Caco-2 (cell line): ENCODE measurements at regions of chr15 and their contacts with region 1.

Region 1: GRCh38 chr15:91302588-91303439 is 202.8 kb downstream of the SV2B start:
- DNase-seq: peak; percentile 38 to 39
- H3K4me3 ChIP-seq: no peak overlapping the region
- H3K4me3 Mint-ChIP-seq: no peak overlapping the region
- H3K27ac Mint-ChIP-seq: no peak overlapping the region
- H3K4me1 ChIP-seq: no peaks in the 10 kb centered on the region
- H3K4me1 Mint-ChIP-seq: no peaks in the 10 kb centered on the region
- H3K27me3 ChIP-seq: peaks cover 1% of the 10 kb centered on the region; the same call in 1 of the 2 replicates
- H3K27me3 Mint-ChIP-seq: peaks cover 22% of the 10 kb centered on the region
- CTCF ChIP-seq: peak; percentile 59 to 63

Region 2: DNA sequence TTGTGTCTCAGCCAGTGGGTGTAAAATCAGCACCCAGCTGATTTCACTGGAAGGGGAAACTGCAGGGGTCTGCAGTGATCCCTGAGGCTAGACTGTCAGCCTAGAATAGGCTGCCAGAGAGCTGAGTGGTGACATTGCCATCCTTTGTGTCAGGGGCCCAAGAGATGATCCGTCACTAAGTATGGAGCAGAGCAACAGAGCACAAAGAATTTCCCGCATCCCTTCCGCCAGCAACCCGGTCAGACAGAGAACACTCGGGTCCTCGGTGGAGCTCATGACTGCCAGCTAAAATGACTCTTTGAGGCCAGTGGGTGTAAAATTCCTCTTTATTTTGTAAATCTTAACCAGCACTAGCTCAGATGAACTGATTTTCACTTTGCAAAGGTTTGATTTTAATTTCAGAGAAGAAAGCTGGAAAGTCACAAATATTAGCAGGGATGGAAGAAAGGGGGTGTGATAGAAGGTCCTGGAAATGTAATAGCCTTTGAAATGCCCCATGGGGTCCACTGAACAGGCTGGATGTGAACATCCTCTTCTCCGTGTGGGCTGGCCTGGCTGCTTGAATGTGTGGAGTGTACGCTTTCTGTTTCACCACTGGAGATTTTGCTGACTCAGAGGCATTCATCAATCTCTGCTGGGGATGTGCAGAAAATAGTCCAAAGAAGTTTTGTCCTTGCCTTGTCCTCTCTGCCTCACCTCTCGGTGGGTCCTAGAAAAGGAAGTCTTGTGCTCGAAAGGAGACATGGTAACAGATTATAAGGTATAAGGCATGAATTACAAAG is 64.0 kb before region 1 on chr15:
- CTCF ChIA-PET with region 1: no interaction called
- POLR2A ChIA-PET with region 1: no interaction called
- intact Hi-C with region 1: no loop called
- DNase-seq: no peak
- H3K4me3 ChIP-seq: no peak overlapping the region
- H3K4me3 Mint-ChIP-seq: no peak overlapping the region
- H3K27ac Mint-ChIP-seq: no peak overlapping the region
- H3K4me1 ChIP-seq: no peaks in the 10 kb centered on the region
- H3K4me1 Mint-ChIP-seq: no peaks in the 10 kb centered on the region
- H3K27me3 ChIP-seq: no peaks in the 10 kb centered on the region
- H3K27me3 Mint-ChIP-seq: no peaks in the 10 kb centered on the region
- CTCF ChIP-seq: no peak

Region 3: DNA sequence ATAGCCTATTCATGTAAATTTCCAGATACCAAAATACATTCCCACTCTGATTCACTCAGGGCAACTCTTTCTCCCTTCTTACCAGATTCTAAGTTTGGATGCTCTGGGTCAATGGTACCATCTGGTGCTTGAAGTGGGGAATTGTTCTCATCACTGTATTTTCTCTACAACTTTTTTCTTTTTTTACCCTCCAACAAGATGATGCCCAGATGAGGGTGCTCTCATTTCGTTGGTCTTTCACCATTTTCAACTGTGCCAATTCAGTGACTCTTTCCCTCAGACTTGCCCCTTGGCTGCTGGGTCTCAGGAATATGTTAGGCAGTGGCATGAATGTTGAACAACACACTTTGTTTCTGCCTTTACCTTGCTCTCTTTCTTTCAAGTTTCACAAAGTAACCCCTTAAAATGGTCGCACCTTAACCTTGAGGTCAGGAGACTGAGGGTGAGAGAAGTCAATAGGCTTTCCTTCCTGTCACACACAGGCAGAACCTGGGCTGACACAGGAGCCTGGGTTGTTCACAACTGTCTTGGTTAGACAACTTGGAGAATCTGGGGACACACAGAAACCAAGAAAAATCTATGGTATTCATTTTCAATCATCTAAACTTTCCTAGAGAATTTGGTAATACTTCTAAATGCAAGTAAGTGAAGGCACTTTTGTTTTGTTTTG is 220.0 kb after region 1 on chr15:
- CTCF ChIA-PET with region 1: no interaction called
- POLR2A ChIA-PET with region 1: no interaction called
- intact Hi-C with region 1: loop called (anchors 1 kb)
- DNase-seq: no peak
- H3K4me3 ChIP-seq: no peak overlapping the region
- H3K4me3 Mint-ChIP-seq: no peak overlapping the region
- H3K27ac Mint-ChIP-seq: no peak overlapping the region
- H3K4me1 ChIP-seq: no peaks in the 10 kb centered on the region
- H3K4me1 Mint-ChIP-seq: no peaks in the 10 kb centered on the region
- H3K27me3 ChIP-seq: no peaks in the 10 kb centered on the region
- H3K27me3 Mint-ChIP-seq: peaks cover 1% of the 10 kb centered on the region
- CTCF ChIP-seq: peak in 1 of 2 experiments; percentile 9

Region 4: GRCh38 chr15:91593067-91593466 is 290.3 kb after region 1 on chr15:
- CTCF ChIA-PET with region 1: no interaction called
- POLR2A ChIA-PET with region 1: no interaction called
- intact Hi-C with region 1: loop called (anchors 10 kb)
- DNase-seq: no peak
- H3K4me3 ChIP-seq: no peak overlapping the region
- H3K4me3 Mint-ChIP-seq: no peak overlapping the region
- H3K27ac Mint-ChIP-seq: no peak overlapping the region
- H3K4me1 ChIP-seq: no peaks in the 10 kb centered on the region
- H3K4me1 Mint-ChIP-seq: no peaks in the 10 kb centered on the region
- H3K27me3 ChIP-seq: no peaks in the 10 kb centered on the region
- H3K27me3 Mint-ChIP-seq: peaks cover 5% of the 10 kb centered on the region
- CTCF ChIP-seq: no peak

Region 5: GRCh38 chr15:91852741-91853510 is 550.1 kb after region 1 on chr15:
- CTCF ChIA-PET with region 1: no interaction called
- POLR2A ChIA-PET with region 1: no interaction called
- intact Hi-C with region 1: loop called (anchors 5 kb)
- DNase-seq: peak; percentile 39 to 46
- H3K4me3 ChIP-seq: peak overlapping the region; percentile 27
- H3K4me3 Mint-ChIP-seq: peak overlapping the region; percentile 57
- H3K27ac Mint-ChIP-seq: no peak overlapping the region
- H3K4me1 ChIP-seq: no peaks in the 10 kb centered on the region
- H3K4me1 Mint-ChIP-seq: no peaks in the 10 kb centered on the region
- H3K27me3 ChIP-seq: no peaks in the 10 kb centered on the region; the same call in 1 of the 2 replicates
- H3K27me3 Mint-ChIP-seq: peaks cover 18% of the 10 kb centered on the region
- CTCF ChIP-seq: peak; percentile 52 to 67

Region 6: DNA sequence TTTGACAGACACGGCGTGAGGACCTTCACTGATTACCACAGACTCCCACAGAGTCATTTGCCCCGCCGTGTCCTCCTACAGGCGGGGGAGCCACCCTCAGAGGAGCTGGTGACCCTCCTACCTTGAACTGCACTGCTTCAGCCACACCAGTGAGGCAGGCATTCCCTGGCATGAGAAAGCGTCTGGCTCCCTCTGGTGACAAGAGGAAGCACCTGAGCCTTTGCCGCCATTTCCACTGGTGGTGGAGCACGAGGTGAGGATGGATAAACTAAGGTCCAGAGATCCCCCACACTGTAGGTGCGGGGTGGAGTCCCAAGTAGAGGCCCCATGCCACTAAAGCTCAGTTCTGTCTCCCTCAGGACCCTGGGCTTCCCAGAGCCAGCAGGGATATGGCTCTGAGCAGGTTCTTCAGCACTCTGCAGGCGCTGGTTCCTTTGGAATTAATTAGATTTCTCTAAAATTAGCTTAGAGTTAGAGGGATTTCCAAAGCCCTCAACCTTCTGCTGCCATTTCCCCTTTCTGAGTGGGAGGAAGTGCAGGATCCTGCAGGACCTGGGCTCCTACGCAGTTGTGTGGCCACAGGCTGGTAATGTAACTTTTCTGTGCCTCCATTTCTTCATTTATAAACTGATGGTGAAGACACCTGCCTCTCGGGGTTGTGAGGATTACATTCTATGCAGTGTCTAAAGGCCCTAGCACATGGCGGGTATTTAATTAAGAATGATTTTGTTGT is 774.7 kb after region 1 on chr15:
- CTCF ChIA-PET with region 1: no interaction called
- POLR2A ChIA-PET with region 1: no interaction called
- intact Hi-C with region 1: loop called (anchors 1 kb)
- DNase-seq: peak; percentile 64 to 68
- H3K4me3 ChIP-seq: no peak overlapping the region
- H3K4me3 Mint-ChIP-seq: no peak overlapping the region
- H3K27ac Mint-ChIP-seq: no peak overlapping the region
- H3K4me1 ChIP-seq: no peaks in the 10 kb centered on the region
- H3K4me1 Mint-ChIP-seq: no peaks in the 10 kb centered on the region
- H3K27me3 ChIP-seq: no peaks in the 10 kb centered on the region
- H3K27me3 Mint-ChIP-seq: peaks cover 11% of the 10 kb centered on the region
- CTCF ChIP-seq: peak; percentile 39 to 64